ENCODE measurements at regions of chr6 and their contacts with region 1.

Region 1: GRCh38 chr6:68634726-68635411 is at the start of gene ADGRB3:
- DNase-seq: no peak
- ATAC-seq: peak; percentile 86
- H3K4me3 ChIP-seq: peak within 1 kb of the TSS; percentile 49 to 55
- H3K27ac ChIP-seq: no peak within 1 kb of the TSS
- H3K4me1 ChIP-seq: peaks cover 20% of the 10 kb centered on the region
- H3K27me3 ChIP-seq: peaks cover 36% of the 10 kb centered on the region
- CTCF ChIP-seq: peak; percentile 25; the same call in 1 of the 2 replicates
- total RNA-seq, gene ADGRB3: 0.10 TPM

Region 2: DNA sequence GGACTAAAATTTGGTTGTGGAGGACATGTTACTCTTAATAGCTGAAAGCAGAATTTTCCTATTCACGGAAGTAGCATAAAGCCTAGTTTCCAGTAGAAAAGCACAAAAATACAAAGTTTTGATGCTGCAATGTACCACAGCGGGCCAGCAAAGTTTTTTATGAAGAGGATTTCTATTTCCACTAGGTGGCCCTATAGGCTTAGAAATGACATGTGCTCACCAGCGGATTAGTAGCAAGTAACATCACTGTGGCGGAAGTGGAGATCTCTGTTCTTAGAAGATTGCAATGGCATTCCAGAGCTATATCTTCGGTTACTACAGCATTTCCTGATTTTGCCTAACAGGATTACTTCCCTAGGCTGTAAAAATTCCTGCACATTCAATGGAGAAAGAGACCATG is 1708.8 kb before region 1 on chr6:
- CTCF ChIA-PET with region 1: no interaction called
- POLR2A ChIA-PET with region 1: no interaction called
- in situ Hi-C with region 1: no loop called
- intact Hi-C with region 1: loop called (anchors 10 kb)
- DNase-seq: peak; percentile 24
- ATAC-seq: peak; percentile 92
- H3K4me3 ChIP-seq: no peak overlapping the region
- H3K27ac ChIP-seq: no peak overlapping the region
- H3K4me1 ChIP-seq: no peaks in the 10 kb centered on the region
- H3K27me3 ChIP-seq: no peaks in the 10 kb centered on the region
- CTCF ChIP-seq: peak; percentile 56

Region 3: GRCh38 chr6:68572525-68572924 is 62.3 kb before region 1 on chr6:
- CTCF ChIA-PET with region 1: no interaction called
- POLR2A ChIA-PET with region 1: no interaction called
- in situ Hi-C with region 1: no loop called
- intact Hi-C with region 1: no loop called
- DNase-seq: peak; percentile 18
- ATAC-seq: peak; percentile 70
- H3K4me3 ChIP-seq: no peak overlapping the region
- H3K27ac ChIP-seq: no peak overlapping the region
- H3K4me1 ChIP-seq: no peaks in the 10 kb centered on the region
- H3K27me3 ChIP-seq: no peaks in the 10 kb centered on the region
- CTCF ChIP-seq: peak; percentile 76

Region 4: GRCh38 chr6:68859233-68859632 is 224.4 kb after region 1 on chr6:
- CTCF ChIA-PET with region 1: no interaction called
- POLR2A ChIA-PET with region 1: no interaction called
- in situ Hi-C with region 1: no loop called
- intact Hi-C with region 1: no loop called
- DNase-seq: no peak
- ATAC-seq: no peak
- H3K4me3 ChIP-seq: no peak overlapping the region
- H3K27ac ChIP-seq: no peak overlapping the region
- H3K4me1 ChIP-seq: no peaks in the 10 kb centered on the region
- H3K27me3 ChIP-seq: no peaks in the 10 kb centered on the region
- CTCF ChIP-seq: no peak

Region 5: GRCh38 chr6:68958327-68958726 is 323.5 kb after region 1 on chr6:
- CTCF ChIA-PET with region 1: interaction called, 6 read pairs
- POLR2A ChIA-PET with region 1: no interaction called
- in situ Hi-C with region 1: no loop called
- intact Hi-C with region 1: loop called (anchors 5 kb)
- DNase-seq: no peak
- ATAC-seq: no peak
- H3K4me3 ChIP-seq: no peak overlapping the region
- H3K27ac ChIP-seq: no peak overlapping the region
- H3K4me1 ChIP-seq: no peaks in the 10 kb centered on the region
- H3K27me3 ChIP-seq: no peaks in the 10 kb centered on the region
- CTCF ChIP-seq: peak; percentile 39; the same call in 1 of the 2 replicates

Measured in Panc1 (cell line).